HepG2 (cell line): ENCODE measurements at regions of chr12 and their contacts with region 1.

Region 1: DNA sequence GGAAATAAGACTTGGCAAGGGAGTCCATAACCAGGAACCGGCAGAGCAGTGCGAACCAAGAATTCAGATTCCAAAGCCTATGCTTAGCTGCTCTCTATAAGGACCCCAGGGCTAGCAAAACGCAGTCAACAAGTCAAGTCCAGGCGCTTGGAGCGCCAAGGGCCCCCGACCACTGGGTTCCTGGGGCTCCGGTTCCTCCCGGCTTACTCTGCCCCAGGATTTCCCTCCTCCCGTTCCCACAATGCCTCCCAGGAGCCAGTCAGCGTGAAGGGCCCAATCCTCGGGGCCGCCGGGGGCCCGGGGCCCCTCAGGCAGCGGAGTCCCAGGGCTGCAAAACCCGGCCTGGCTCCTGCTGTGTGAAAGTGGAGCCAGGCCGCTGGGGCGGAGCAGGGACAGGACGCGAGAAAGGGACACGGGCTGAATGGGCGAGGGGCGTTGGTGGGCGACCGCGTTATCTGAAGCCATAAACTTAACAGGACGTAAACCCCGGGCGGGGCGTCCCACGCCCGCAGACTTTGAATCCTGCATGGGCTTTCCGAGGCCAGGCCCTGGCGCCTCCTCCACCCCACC is 1.5 kb downstream of the KRT8 start:
- DNase-seq: peak; percentile 69
- ATAC-seq: peak; percentile 71
- H3K4me3 ChIP-seq: peak overlapping the region; percentile 87 to 97 (median 95)
- H3K27ac ChIP-seq: peak overlapping the region; percentile 71
- H3K4me1 ChIP-seq: peaks cover 73% of the 10 kb centered on the region
- H3K27me3 ChIP-seq: no peaks in the 10 kb centered on the region; a peak in 1 of 5 replicates
- CTCF ChIP-seq: no peak
- EP300 ChIP-seq: no peak
- POLR2A ChIP-seq: peak in 1 of 2 experiments; percentile 1; a peak in 3 of 4 replicates
- RAD21 ChIP-seq: peak; percentile 46; the same call in 1 of the 2 replicates

Region 2: DNA sequence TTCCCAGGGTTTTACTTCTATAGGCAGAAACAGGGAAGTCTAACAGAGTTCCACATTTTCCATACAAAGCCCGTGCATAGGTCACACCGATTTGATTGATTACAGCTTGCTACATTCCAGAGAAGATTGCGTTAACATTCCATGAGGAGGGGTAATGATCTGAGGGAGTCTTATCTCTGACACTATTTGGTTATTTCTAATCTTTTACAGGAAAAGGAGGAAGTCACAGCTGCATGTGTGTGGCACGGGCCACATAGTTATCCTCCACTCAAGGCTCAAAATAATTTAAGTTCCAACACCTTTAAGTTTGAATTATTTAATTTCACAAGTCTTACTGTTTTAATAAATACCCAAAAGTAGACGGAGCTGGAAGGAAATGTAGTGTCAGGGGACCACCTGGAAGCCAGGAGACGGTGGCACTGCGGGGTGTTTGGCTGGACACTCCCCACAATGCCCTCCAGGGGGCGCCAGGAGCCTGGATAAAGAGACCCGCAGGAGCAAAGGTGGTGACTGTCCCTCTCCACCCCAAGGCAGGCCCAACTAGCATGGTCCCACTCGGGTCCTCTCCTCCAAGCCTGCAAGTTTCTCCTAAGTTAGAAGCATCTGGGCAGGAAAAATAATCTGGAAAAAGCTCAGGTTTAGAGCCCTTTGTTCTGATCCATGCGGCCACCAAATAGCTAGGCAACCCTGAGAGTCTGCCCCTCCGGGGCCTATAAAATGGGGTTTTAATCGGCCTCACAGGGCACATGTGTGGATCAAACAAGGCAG is 18.7 kb before region 1 on chr12:
- CTCF ChIA-PET with region 1: interaction called, 8 read pairs
- POLR2A ChIA-PET with region 1: interaction called, 40 read pairs
- in situ Hi-C with region 1: no loop called
- intact Hi-C with region 1: loop called (anchors 1 kb)
- DNase-seq: peak; percentile 97
- ATAC-seq: peak; percentile 80
- H3K4me3 ChIP-seq: peak overlapping the region in 2 of 3 experiments; percentile 29 to 42; a peak in 1 of 6 replicates
- H3K27ac ChIP-seq: peak overlapping the region; percentile 86
- H3K4me1 ChIP-seq: peaks cover 60% of the 10 kb centered on the region
- H3K27me3 ChIP-seq: no peaks in the 10 kb centered on the region
- CTCF ChIP-seq: peak; percentile 96
- EP300 ChIP-seq: peak; percentile 65 to 93; a peak in 2 of 4 replicates
- POLR2A ChIP-seq: no peak; a peak in 1 of 4 replicates
- RAD21 ChIP-seq: peak; percentile 98

Region 3: GRCh38 chr12:52942066-52942900 is 38.9 kb after region 1 on chr12:
- CTCF ChIA-PET with region 1: no interaction called
- POLR2A ChIA-PET with region 1: interaction called, 437 read pairs
- in situ Hi-C with region 1: no loop called
- intact Hi-C with region 1: no loop called
- DNase-seq: no peak
- ATAC-seq: no peak
- H3K4me3 ChIP-seq: no peak overlapping the region
- H3K27ac ChIP-seq: no peak overlapping the region
- H3K4me1 ChIP-seq: peaks cover 53% of the 10 kb centered on the region
- H3K27me3 ChIP-seq: no peaks in the 10 kb centered on the region
- CTCF ChIP-seq: no peak
- EP300 ChIP-seq: no peak
- POLR2A ChIP-seq: no peak
- RAD21 ChIP-seq: no peak

Region 4: GRCh38 chr12:52956987-52957386 is 53.6 kb after region 1 on chr12:
- CTCF ChIA-PET with region 1: interaction called, 3 read pairs
- POLR2A ChIA-PET with region 1: interaction called, 437 read pairs
- in situ Hi-C with region 1: no loop called
- intact Hi-C with region 1: no loop called
- DNase-seq: no peak
- ATAC-seq: peak; percentile 30
- H3K4me3 ChIP-seq: no peak overlapping the region
- H3K27ac ChIP-seq: no peak overlapping the region
- H3K4me1 ChIP-seq: peaks cover 32% of the 10 kb centered on the region
- H3K27me3 ChIP-seq: no peaks in the 10 kb centered on the region
- CTCF ChIP-seq: no peak
- EP300 ChIP-seq: no peak
- POLR2A ChIP-seq: no peak
- RAD21 ChIP-seq: no peak

Region 5: GRCh38 chr12:52992699-52993557 is 89.6 kb after region 1 on chr12:
- CTCF ChIA-PET with region 1: no interaction called
- POLR2A ChIA-PET with region 1: interaction called, 49 read pairs
- in situ Hi-C with region 1: no loop called
- intact Hi-C with region 1: no loop called
- DNase-seq: peak; percentile 99
- ATAC-seq: peak; percentile 88
- H3K4me3 ChIP-seq: peak overlapping the region; percentile 13 to 55 (median 18); a peak in 5 of 6 replicates
- H3K27ac ChIP-seq: peak overlapping the region; percentile 99
- H3K4me1 ChIP-seq: peaks cover 61% of the 10 kb centered on the region
- H3K27me3 ChIP-seq: no peaks in the 10 kb centered on the region
- CTCF ChIP-seq: no peak; the same call in 1 of the 2 replicates
- EP300 ChIP-seq: peak; percentile 65 to 87; a peak in 3 of 4 replicates
- POLR2A ChIP-seq: peak; percentile 17 to 66; a peak in 3 of 4 replicates
- RAD21 ChIP-seq: peak; percentile 42; the same call in 1 of the 2 replicates

Region 6: GRCh38 chr12:53061404-53062010 is 158.1 kb after region 1 on chr12:
- CTCF ChIA-PET with region 1: no interaction called
- POLR2A ChIA-PET with region 1: no interaction called
- in situ Hi-C with region 1: no loop called
- intact Hi-C with region 1: no loop called
- DNase-seq: peak; percentile 92
- ATAC-seq: peak; percentile 81
- H3K4me3 ChIP-seq: peak overlapping the region in 1 of 3 experiments; percentile 18; a peak in 1 of 6 replicates
- H3K27ac ChIP-seq: peak overlapping the region; percentile 61
- H3K4me1 ChIP-seq: peaks cover 34% of the 10 kb centered on the region
- H3K27me3 ChIP-seq: no peaks in the 10 kb centered on the region
- CTCF ChIP-seq: peak; percentile 69
- EP300 ChIP-seq: peak in 1 of 2 experiments; percentile 80; a peak in 2 of 4 replicates
- POLR2A ChIP-seq: peak in 1 of 2 experiments; percentile 4; a peak in 1 of 4 replicates
- RAD21 ChIP-seq: peak; percentile 38; the same call in 1 of the 2 replicates

Region 7: DNA sequence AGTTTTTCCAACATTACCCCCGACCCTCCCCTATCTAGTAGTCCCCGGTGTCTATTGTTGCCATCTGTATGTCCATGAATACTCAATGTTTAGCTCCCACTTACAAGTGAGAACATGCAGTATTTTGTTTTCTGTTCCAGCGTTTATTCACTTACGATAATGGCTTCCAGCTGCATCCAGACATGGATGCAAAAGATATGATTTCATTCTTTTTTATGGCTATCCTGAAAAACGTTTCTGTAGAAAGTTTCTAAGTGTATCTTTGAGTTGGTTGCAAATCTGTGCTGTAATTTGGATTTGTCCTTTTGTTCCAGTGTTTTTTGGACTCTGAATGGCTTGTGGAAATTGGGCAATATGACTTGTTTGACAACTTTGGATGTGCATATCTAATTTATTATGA is 488.4 kb after region 1 on chr12:
- CTCF ChIA-PET with region 1: no interaction called
- POLR2A ChIA-PET with region 1: no interaction called
- in situ Hi-C with region 1: no loop called
- intact Hi-C with region 1: no loop called
- DNase-seq: no peak
- ATAC-seq: no peak
- H3K4me3 ChIP-seq: no peak overlapping the region
- H3K27ac ChIP-seq: no peak overlapping the region
- H3K4me1 ChIP-seq: peaks cover 46% of the 10 kb centered on the region
- H3K27me3 ChIP-seq: no peaks in the 10 kb centered on the region
- CTCF ChIP-seq: no peak
- EP300 ChIP-seq: no peak
- POLR2A ChIP-seq: no peak
- RAD21 ChIP-seq: no peak